AG04450 (cell line): ENCODE measurements at regions of chr7 and their contacts with region 1.

Region 1: DNA sequence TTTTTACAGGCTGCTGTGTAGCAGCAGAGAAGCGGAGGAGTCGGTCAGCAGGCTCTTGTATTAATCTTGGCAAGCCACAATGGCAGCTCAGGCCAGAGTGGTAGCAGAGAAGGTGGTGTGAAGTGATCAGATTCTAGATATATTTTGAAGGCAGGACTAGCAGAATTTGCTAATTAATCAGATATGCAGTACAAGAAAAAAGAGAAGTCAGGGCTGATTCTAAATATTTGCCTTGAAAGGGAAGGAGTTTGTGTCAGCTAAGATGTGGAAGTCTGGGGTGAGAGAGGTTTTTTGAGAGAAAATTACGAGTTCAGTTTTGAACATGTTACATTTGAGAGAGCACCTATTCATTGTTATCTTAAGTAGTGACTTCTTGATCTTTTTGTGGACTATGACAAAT is 176.3 kb downstream of the WNT2 start:
- DNase-seq: no peak
- H3K4me3 ChIP-seq: no peak overlapping the region
- H3K27ac ChIP-seq: no peak overlapping the region
- H3K27me3 ChIP-seq: no peaks in the 10 kb centered on the region
- CTCF ChIP-seq: no peak

Region 2: DNA sequence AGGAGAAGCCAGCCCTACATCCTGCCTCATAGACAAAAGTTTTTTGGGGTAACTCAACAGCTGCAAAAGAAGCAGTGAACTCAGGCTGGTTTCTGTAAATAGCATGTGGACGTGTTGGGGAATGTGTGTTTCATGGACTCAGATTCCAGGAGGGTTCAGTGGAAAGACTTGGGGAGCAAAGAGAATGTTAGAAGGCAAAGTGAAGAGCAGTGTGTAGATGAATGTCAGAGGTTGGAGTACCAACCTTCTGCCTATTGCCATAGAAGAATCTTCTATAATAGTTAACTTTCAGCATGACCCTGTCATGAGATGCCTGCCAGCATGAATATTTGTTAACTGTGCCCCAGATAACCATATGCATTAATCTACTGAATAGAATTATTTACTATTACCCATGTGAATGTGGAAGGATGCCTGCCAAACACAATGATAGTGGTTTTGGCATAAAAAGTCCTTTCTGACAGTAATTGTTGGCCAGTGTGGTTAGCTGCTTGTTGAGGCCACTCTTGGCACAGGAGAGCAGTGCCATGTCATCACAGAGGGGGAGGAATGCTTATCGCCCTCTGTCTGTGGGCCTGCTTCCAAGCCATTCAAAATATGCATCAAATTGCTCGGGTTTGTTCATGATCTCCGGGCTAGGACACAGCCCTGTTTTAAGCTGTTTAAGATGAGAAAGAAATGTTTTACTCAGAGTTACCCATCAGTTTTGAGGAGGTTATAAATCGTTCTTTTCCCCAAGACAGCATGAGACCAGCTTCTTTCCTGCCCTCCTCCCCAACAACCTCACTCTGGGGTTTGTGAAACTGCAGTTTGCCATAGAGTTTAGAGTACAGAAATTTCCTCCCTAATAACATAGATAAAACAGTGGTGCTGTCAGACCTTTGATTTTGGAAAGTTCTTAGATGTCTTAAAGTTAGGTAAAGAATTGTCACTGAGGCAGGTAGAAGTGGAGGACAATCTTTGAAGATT is 11.0 kb after region 1 on chr7:
- CTCF ChIA-PET with region 1: interaction called, 18 read pairs
- POLR2A ChIA-PET with region 1: interaction called, 6 read pairs
- DNase-seq: peak; percentile 59
- H3K4me3 ChIP-seq: no peak overlapping the region
- H3K27ac ChIP-seq: peak overlapping the region; percentile 49
- H3K27me3 ChIP-seq: no peaks in the 10 kb centered on the region
- CTCF ChIP-seq: peak; percentile 48